Caco-2 (cell line): ENCODE measurements at regions of chr2 and their contacts with region 1.

Region 1: GRCh38 chr2:227238238-227239237 is 74.1 kb downstream of the COL4A3 start:
- DNase-seq: peak; percentile 61 to 72
- H3K4me3 ChIP-seq: no peak overlapping the region
- H3K4me3 Mint-ChIP-seq: no peak overlapping the region
- H3K27ac Mint-ChIP-seq: no peak overlapping the region
- H3K4me1 ChIP-seq: peaks cover 6% of the 10 kb centered on the region; the same call in 1 of the 2 replicates
- H3K4me1 Mint-ChIP-seq: peaks cover 16% of the 10 kb centered on the region
- H3K27me3 ChIP-seq: no peaks in the 10 kb centered on the region
- H3K27me3 Mint-ChIP-seq: no peaks in the 10 kb centered on the region
- CTCF ChIP-seq: peak; percentile 69 to 75

Region 2: GRCh38 chr2:227033471-227034148 is 204.9 kb before region 1 on chr2:
- CTCF ChIA-PET with region 1: no interaction called
- POLR2A ChIA-PET with region 1: no interaction called
- intact Hi-C with region 1: loop called (anchors 10 kb)
- DNase-seq: peak; percentile 51 to 60
- H3K4me3 ChIP-seq: no peak overlapping the region
- H3K4me3 Mint-ChIP-seq: no peak overlapping the region
- H3K27ac Mint-ChIP-seq: no peak overlapping the region
- H3K4me1 ChIP-seq: peaks cover 4% of the 10 kb centered on the region; the same call in 1 of the 2 replicates
- H3K4me1 Mint-ChIP-seq: no peaks in the 10 kb centered on the region
- H3K27me3 ChIP-seq: no peaks in the 10 kb centered on the region
- H3K27me3 Mint-ChIP-seq: no peaks in the 10 kb centered on the region
- CTCF ChIP-seq: peak; percentile 54 to 72

Region 3: DNA sequence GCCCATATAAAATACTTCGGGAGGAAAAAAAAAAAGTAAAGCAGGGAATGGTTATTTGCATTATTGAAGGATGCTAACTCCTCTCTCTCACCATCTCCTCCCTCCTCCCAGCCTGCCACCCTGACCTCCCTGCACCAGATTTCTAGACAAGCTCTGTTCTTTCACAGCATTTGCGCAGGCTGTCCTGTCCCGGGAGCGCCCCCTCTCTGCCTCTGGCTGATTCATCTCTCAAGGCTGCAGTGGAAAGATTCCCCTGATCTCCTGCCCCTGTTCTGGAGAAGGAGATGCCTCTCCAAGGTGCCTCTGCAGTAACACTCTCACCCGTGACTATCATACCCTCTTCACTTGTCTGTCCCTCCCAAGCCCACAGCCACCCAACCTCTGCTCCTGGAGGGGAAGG is 113.0 kb before region 1 on chr2:
- CTCF ChIA-PET with region 1: interaction called, 9 read pairs
- POLR2A ChIA-PET with region 1: no interaction called
- intact Hi-C with region 1: loop called (anchors 1 kb)
- DNase-seq: peak; percentile 25 to 41
- H3K4me3 ChIP-seq: no peak overlapping the region
- H3K4me3 Mint-ChIP-seq: no peak overlapping the region
- H3K27ac Mint-ChIP-seq: peak overlapping the region; percentile 62
- H3K4me1 ChIP-seq: peaks cover 15% of the 10 kb centered on the region
- H3K4me1 Mint-ChIP-seq: peaks cover 29% of the 10 kb centered on the region
- H3K27me3 ChIP-seq: no peaks in the 10 kb centered on the region
- H3K27me3 Mint-ChIP-seq: no peaks in the 10 kb centered on the region
- CTCF ChIP-seq: peak in 1 of 2 experiments; percentile 8

Region 4: DNA sequence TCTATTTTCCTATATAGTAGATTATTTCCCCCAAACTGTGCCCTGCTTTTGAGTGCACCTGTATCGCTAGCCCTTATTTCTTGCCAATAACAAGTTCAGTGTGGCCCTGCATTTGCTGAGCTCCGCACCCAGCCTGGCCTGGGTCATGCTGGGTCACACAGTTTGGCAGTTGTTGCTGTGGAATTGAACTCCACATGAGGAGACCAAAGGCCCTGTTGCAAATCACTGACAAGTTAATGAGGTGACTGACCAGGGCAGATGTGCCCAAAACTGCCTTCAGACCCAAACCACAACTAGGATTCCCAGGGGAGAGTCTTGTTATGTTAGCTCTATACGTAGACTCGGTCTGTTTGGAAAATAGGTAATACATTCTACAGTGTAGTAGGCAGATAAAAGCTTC is 105.6 kb before region 1 on chr2:
- CTCF ChIA-PET with region 1: interaction called, 9 read pairs
- POLR2A ChIA-PET with region 1: no interaction called
- intact Hi-C with region 1: loop called (anchors 1 kb)
- DNase-seq: no peak
- H3K4me3 ChIP-seq: no peak overlapping the region
- H3K4me3 Mint-ChIP-seq: no peak overlapping the region
- H3K27ac Mint-ChIP-seq: no peak overlapping the region
- H3K4me1 ChIP-seq: no peaks in the 10 kb centered on the region; the same call in 1 of the 2 replicates
- H3K4me1 Mint-ChIP-seq: peaks cover 22% of the 10 kb centered on the region
- H3K27me3 ChIP-seq: no peaks in the 10 kb centered on the region
- H3K27me3 Mint-ChIP-seq: no peaks in the 10 kb centered on the region
- CTCF ChIP-seq: no peak

Region 5: DNA sequence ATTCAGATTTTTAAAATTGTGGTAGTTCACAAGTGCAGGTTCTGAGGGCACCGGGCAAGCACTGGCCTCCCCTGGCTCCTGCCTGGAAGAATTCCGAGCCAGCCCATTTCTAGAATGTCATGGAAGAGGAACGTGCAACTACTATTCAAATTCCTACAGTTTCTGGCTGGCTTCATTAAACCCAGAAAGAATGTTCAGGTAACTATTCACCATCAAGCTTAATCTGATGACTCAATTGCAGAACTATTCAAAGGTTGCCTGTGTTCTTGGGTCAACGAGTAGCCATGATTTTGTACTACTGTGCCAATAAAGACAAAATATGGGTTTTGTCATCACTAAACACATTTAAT is 72.2 kb after region 1 on chr2:
- CTCF ChIA-PET with region 1: no interaction called
- POLR2A ChIA-PET with region 1: no interaction called
- intact Hi-C with region 1: loop called (anchors 1 kb)
- DNase-seq: no peak
- H3K4me3 ChIP-seq: no peak overlapping the region
- H3K4me3 Mint-ChIP-seq: no peak overlapping the region
- H3K27ac Mint-ChIP-seq: peak overlapping the region; percentile 71
- H3K4me1 ChIP-seq: peaks cover 62% of the 10 kb centered on the region
- H3K4me1 Mint-ChIP-seq: peaks cover 20% of the 10 kb centered on the region
- H3K27me3 ChIP-seq: no peaks in the 10 kb centered on the region
- H3K27me3 Mint-ChIP-seq: no peaks in the 10 kb centered on the region
- CTCF ChIP-seq: no peak

Region 6: DNA sequence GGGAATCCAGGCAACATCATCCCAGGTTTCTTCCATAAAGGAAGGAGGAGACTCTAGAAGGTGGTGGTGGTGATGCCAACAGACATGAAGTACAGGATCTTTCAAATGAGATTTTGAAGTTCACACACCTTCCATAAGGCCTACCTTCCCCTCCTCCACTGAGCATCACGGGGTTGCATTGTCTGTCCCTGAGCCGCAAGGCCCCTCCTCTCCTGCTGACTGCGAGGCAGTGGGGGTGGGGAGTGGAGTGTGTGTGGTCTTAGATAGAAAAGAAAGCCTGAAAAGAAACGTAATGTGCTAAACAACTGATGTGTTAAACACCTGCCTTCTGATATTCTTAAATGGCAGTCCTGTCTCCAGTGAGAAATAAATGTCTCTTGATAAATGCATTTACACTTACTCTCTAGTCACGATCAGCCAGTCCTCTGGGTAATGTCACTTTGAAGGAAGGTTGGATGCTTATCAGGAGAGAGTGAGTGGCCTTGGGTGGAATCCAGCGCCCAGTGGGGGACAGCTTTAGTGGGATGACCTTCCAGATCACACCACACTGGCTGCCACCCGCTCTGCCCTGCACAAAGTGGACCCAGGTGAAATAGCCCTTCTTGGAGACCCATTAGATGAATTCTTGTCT is 422.6 kb after region 1 on chr2:
- CTCF ChIA-PET with region 1: no interaction called
- POLR2A ChIA-PET with region 1: no interaction called
- intact Hi-C with region 1: no loop called
- DNase-seq: no peak
- H3K4me3 ChIP-seq: no peak overlapping the region
- H3K4me3 Mint-ChIP-seq: no peak overlapping the region
- H3K27ac Mint-ChIP-seq: no peak overlapping the region
- H3K4me1 ChIP-seq: no peaks in the 10 kb centered on the region
- H3K4me1 Mint-ChIP-seq: peaks cover 7% of the 10 kb centered on the region
- H3K27me3 ChIP-seq: no peaks in the 10 kb centered on the region
- H3K27me3 Mint-ChIP-seq: no peaks in the 10 kb centered on the region
- CTCF ChIP-seq: no peak